ENCODE measurements at regions of chr14 and their contacts with region 1.

Region 1: DNA sequence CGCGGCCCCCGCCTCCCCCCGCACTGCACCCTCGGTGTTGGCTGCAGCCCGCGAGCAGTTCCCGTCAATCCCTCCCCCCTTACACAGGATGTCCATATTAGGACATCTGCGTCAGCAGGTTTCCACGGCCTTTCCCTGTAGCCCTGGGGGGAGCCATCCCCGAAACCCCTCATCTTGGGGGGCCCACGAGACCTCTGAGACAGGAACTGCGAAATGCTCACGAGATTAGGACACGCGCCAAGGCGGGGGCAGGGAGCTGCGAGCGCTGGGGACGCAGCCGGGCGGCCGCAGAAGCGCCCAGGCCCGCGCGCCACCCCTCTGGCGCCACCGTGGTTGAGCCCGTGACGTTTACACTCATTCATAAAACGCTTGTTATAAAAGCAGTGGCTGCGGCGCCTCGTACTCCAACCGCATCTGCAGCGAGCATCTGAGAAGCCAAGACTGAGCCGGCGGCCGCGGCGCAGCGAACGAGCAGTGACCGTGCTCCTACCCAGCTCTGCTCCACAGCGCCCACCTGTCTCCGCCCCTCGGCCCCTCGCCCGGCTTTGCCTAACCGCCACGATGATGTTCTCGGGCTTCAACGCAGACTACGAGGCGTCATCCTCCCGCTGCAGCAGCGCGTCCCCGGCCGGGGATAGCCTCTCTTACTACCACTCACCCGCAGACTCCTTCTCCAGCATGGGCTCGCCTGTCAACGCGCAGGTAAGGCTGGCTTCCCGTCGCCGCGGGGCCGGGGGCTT is at the start of gene FOS:
- DNase-seq: peak; percentile 99
- H3K4me3 ChIP-seq: peak within 1 kb of the TSS; percentile 66 to 84 (median 69)
- H3K27ac ChIP-seq: peak within 1 kb of the TSS; percentile 96 to 99 (median 99)
- H3K4me1 ChIP-seq: peaks cover 26 to 69% (median 58%) of the 10 kb centered on the region in 4 donors
- H3K27me3 ChIP-seq: no peaks in the 10 kb centered on the region
- CTCF ChIP-seq: no peak
- EP300 ChIP-seq: peak; percentile 87
- POLR2A ChIP-seq: peak; percentile 99
- total RNA-seq, gene FOS: 68.6 to 695 (median 143) TPM

Region 2: DNA sequence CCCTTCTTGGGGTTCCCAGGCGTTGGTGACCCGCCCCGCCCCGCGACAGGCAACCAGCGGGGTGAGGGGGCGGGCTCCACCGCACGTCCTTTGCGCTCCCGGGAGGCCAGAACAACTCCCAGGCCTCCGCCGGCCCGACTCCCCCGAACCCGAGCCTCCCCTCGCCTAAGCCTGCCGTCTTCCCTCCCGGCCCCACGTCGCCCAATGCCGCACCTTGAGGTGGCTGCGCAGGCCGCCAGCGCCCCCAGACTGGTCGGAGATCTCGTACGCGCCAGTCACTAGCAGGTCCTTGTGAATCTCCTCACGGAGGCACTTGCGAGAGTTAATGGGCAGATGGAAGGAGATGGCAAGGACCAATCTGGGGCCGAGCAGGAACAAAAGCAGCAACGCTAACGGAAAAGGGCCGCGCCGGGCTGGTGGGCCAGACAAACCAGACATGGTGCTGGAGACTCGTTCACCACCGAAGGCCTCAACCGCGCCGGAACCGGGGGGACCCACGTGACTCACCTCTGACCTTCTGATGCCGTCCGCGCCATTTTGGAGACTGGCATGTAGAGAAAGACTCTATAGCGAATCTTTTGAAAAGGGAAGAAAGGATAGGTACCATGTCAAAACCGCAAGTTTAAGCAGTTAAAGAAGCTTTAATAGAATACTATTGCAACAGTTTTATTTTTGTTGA is 102.3 kb before region 1 on chr14 and contains the start of gene TMED10:
- intact Hi-C with region 1: loop called (anchors 5 kb)
- DNase-seq: peak; percentile 98
- H3K4me3 ChIP-seq: peak within 1 kb of the TSS; percentile 83 to 96 (median 88)
- H3K27ac ChIP-seq: peak within 1 kb of the TSS; percentile 94 to 99 (median 97)
- H3K4me1 ChIP-seq: peaks cover 25 to 42% (median 35%) of the 10 kb centered on the region in 4 donors
- H3K27me3 ChIP-seq: no peaks in the 10 kb centered on the region
- CTCF ChIP-seq: no peak
- EP300 ChIP-seq: no peak
- POLR2A ChIP-seq: no peak
- total RNA-seq, gene TMED10: 115 to 164 (median 129) TPM

Region 3: DNA sequence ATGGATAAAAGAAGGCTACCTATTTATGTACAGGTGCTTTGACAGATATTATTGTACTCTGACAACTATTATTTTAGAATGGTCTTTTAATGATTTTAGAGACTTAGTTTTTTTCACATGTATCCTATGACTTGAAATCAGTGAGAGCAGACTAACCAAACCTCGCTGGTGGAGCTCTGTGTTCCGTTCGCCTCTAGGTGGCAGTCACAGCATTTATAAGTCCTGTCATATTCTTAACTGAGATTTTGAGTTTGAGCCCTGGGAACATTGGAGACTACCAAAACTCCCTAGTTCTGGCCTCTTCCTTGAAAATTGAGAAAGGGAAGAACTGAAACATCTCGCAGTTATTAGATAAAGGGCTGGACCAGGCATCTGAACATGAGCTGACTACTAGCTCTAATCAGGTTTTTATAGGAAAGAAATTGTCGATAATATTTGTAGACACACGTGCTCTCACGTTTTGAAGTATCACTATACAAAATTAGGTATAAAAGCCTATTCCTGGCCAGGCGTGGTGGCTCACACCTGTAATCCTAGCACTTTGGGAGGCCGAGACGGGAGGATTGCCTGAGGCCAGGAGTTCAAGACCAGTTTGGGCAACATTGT is 430.7 kb after region 1 on chr14:
- intact Hi-C with region 1: no loop called
- DNase-seq: no peak
- H3K4me3 ChIP-seq: no peak overlapping the region
- H3K27ac ChIP-seq: no peak overlapping the region
- H3K4me1 ChIP-seq: peaks cover 10 to 22% (median 19%) of the 10 kb centered on the region in 4 donors
- H3K27me3 ChIP-seq: no peaks in the 10 kb centered on the region
- CTCF ChIP-seq: peak; percentile 79 to 86 (median 82)
- EP300 ChIP-seq: no peak
- POLR2A ChIP-seq: no peak

Measured in esophagus muscularis mucosa (tissue), 4 donors.